Motor neuron (in vitro differentiated cells): ENCODE measurements at regions of chr9 and their contacts with region 1.

Region 1: GRCh38 chr9:104301755-104302154 is 202.3 kb upstream of the OR13F1 start:
- ATAC-seq: no peak
- H3K4me3 ChIP-seq: no peak overlapping the region
- H3K27ac ChIP-seq: no peak overlapping the region
- H3K4me1 ChIP-seq: no peaks in the 10 kb centered on the region

Region 2: GRCh38 chr9:104200456-104200994 is 101.2 kb before region 1 on chr9:
- in situ Hi-C with region 1: loop called in 1 of 9 experiments (anchors 25 kb)
- ATAC-seq: no peak
- H3K4me3 ChIP-seq: no peak overlapping the region
- H3K27ac ChIP-seq: no peak overlapping the region
- H3K4me1 ChIP-seq: no peaks in the 10 kb centered on the region